KBM-7 (cell line): ENCODE measurements at regions of chr3 and their contacts with region 1.

Region 1: DNA sequence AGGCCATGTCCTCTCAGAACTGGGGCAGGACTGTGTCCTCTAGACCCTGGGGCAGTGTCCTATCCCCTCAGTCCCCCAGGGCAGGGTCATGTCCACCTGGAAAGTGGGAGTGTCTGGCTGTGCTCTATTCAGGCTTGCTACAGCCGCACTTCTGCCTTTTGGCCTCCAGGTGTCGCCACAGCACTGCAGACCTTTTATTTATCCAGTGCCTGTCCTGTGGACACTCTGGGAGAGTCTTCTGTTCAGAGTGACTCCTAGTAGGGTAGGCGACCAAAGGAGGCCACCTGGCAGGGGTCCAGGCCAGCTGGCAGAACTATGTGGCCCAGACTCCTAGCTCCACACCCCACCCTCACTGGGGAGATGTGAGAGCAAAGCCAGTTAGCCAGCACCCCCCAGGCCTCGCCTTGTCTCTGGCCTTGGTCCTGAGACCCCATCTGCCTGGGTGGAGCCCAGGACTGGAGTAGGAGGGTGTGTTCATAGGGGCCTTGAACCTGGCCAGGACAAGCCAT is 3.9 kb downstream of the TMIE start:
- DNase-seq: peak; percentile 84

Region 2: DNA sequence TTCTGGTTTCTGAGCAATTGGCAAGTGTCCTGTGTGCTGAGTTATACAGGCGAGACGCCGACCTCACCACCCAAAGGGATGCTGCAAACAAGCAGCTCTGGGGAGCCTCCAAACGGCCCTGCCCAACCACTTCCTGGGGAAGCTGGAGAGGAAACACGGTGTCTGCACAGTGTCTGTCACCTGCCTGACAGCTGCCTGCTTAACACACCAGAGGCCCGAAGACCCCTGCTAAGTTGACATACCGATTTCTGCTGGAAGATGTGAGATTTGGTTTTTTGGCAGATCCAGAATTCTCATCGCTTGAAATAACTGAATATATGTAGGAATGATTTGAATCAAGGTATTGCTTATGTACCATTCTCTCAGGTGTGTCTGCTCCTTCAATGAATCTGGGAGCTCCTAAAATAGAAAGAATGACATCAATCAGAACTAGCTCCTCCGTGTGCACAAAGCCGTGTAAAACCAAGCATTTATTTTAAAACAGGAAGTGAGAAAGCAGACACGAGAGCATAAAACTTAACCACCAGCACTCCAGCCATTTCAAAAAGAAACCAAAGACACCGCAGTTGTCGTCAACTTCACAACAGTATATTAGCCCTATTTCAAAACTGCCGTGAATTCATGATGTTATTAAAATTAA is 166.2 kb before region 1 on chr3:
- in situ Hi-C with region 1: no loop called
- DNase-seq: peak; percentile 89

Region 3: DNA sequence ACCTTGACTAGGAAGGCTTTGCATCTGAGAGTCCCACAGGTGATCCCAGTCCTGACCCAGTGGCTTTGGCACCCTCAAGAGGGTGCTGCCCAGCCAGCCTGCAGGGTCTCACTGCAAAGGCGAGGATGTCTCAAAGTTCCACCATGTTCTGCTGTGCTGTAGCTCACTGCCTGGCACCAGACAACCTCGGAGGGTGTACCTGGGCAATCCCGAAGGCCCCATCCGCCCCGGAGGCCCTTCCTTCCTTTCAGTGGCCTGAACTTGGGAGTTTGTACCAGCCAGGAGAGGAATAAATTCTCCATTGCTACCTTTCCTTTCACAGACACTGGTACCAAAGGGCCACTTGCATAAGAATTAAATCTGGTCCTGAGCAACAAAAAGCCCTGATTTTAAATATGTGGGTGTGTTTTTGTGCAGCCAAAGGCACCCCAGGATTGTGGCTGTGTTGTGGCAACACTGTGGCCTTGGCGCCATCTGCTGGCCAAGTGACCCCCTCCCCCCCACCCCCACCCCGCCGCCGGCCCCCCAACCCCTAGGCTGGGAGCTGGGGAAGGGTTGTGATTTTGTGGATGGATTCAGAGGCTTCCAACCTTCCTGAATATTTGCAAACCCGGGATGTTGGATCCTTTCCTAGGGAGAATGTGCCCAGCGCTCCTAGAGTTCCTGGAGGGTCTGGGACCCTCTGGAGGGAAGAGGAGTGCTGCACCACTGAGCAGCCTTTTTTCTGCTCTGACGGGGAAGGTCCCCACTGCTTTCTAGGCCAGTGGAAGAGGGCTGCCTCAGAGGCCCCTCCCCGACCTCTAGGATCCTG is 666.0 kb after region 1 on chr3:
- in situ Hi-C with region 1: loop called (anchors 25 kb)
- DNase-seq: no peak